Heart left ventricle (tissue), 16 donors: ENCODE measurements at regions of chr15 and their contacts with region 1.

Region 1: GRCh38 chr15:73539212-73540125 is 93.7 kb downstream of the NPTN start:
- DNase-seq: peak in 1 of 5 donors; percentile 31
- ATAC-seq: no peak
- H3K4me3 ChIP-seq: no peak overlapping the region
- H3K27ac ChIP-seq: no peak overlapping the region
- H3K4me1 ChIP-seq: no peaks in the 10 kb centered on the region
- H3K27me3 ChIP-seq: no peaks in the 10 kb centered on the region
- CTCF ChIP-seq: peak in 1 of 12 donors; percentile 18
- POLR2A ChIP-seq: no peak

Region 2: GRCh38 chr15:73318463-73319351 is 220.8 kb before region 1 on chr15:
- intact Hi-C with region 1: loop called in 2 of 10 experiments (anchors 10 kb)
- DNase-seq: no peak
- ATAC-seq: peak in 3 of 4 donors; percentile 11 to 37 (median 13)
- H3K4me3 ChIP-seq: no peak overlapping the region
- H3K27ac ChIP-seq: no peak overlapping the region
- H3K4me1 ChIP-seq: peaks cover 0 to 6% (median 0%) of the 10 kb centered on the region in 12 donors
- H3K27me3 ChIP-seq: peaks cover 0 to 25% (median 9%) of the 10 kb centered on the region in 9 donors
- CTCF ChIP-seq: no peak
- POLR2A ChIP-seq: no peak

Region 3: DNA sequence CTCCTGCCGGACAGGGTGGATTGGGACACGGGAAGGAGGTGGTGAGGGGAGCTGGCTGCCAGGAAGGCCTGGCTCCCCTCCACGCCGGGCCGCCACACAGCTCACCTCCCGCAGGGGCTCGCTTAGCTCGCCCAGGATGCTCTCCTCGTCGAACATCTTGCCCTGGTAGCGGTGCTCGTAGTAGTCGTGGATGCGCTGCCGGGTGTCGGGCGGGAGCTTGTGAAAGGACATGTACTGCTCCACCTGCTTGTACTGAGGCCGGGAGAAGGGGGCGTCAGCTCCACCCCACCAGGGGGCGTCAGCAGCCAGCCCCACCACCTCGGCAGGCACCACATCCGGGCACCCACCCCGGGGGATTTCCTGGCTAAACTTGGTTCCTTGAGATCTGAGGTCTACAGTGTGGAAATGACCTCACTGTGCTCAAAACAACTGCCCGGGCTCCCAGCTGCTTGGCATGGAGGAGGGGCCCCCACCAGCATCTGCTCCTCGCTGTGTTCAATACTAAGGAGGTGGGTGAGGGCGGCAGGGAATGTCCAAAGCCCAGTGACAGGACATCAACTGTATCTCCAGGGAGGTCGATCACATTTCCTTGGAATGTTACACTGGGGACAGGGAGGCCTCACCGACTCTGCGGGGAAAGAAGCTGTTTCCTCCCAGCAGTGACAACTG is 214.1 kb before region 1 on chr15:
- intact Hi-C with region 1: loop called in 1 of 10 experiments (anchors 10 kb)
- DNase-seq: peak in 1 of 5 donors; percentile 20
- ATAC-seq: peak in 1 of 4 donors; percentile 21
- H3K4me3 ChIP-seq: no peak overlapping the region
- H3K27ac ChIP-seq: no peak overlapping the region
- H3K4me1 ChIP-seq: peaks cover 0 to 11% (median 1%) of the 10 kb centered on the region in 12 donors
- H3K27me3 ChIP-seq: peaks cover 0 to 18% (median 0%) of the 10 kb centered on the region in 9 donors
- CTCF ChIP-seq: peak in 9 of 12 donors; percentile 9 to 47 (median 27)
- POLR2A ChIP-seq: no peak

Region 4: DNA sequence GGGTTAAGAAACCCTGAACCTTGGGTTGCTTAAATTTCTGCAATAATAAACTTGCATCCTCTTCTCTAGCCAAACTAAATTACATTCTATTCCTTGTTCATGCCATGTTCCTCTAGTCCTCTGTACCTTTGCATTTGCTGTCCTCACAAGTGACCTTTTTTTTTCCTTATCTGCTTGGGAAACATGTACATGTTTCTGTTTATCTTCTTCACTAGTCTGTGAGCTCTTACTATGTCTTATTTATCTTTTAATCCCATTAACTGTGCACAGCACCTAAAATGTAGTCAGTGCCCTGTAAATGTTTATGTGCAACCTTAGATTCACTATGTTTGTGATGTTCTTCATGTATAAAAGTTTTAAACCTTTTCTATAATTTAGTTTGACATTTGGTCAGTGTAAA is 34.6 kb before region 1 on chr15:
- intact Hi-C with region 1: no loop called
- DNase-seq: no peak
- ATAC-seq: no peak
- H3K4me3 ChIP-seq: no peak overlapping the region
- H3K27ac ChIP-seq: no peak overlapping the region
- H3K4me1 ChIP-seq: no peaks in the 10 kb centered on the region
- H3K27me3 ChIP-seq: no peaks in the 10 kb centered on the region
- CTCF ChIP-seq: no peak
- POLR2A ChIP-seq: no peak

Region 5: DNA sequence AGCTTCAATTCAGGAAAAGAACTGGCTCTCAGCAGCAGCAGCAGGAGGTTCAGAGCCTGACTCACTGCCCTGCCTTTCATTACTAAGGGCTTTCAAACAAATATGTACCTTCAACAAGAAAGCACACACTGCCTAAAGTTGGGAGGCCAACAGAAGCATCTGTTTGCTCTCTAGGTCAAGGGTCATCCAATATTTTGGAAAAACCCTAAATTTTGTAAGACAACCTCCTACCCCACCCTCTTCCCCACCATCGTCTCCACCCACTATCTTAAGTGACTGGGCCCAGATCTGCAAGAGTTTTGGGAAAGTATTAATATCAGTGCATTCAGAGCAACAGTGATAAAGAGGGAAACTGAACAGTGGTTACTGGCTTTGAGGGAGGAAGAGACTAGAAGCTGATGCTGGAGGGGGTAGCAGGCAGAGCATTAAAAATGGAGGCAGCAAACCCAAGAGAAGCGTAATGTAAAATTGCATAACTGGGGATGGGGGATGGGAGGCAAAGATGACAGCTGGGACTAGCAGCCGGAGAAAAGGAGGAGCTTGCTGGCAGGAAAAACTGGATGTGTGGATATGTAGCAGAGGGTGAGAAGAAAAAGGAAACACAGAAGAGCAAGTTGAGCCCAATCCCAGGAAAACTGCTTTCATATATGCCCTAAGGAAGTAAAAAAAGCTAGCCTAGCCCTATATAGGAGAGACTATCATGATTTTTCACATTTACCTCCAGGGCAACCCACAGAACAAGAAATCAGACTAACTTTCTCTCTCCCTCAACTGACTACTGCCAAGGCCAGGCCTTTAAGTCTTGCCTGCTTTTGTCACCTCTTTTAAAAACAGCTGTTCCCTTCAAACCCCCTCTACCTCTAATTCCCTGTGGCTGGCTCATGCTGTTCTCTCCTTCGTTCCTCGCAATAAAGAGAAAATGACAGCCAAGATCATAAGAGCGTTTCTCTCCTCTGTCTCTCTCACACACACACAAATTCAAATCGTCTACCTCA is 62.3 kb after region 1 on chr15:
- intact Hi-C with region 1: no loop called
- DNase-seq: peak in 4 of 5 donors; percentile 50 to 53 (median 52)
- ATAC-seq: peak; percentile 18 to 74 (median 60)
- H3K4me3 ChIP-seq: no peak overlapping the region
- H3K27ac ChIP-seq: peak overlapping the region; percentile 46 to 84 (median 72)
- H3K4me1 ChIP-seq: peaks cover 20 to 100% (median 81%) of the 10 kb centered on the region in 12 donors
- H3K27me3 ChIP-seq: no peaks in the 10 kb centered on the region
- CTCF ChIP-seq: no peak
- POLR2A ChIP-seq: no peak